PC-9 (cell line): ENCODE measurements at regions of chr1 and their contacts with region 1.

Region 1: DNA sequence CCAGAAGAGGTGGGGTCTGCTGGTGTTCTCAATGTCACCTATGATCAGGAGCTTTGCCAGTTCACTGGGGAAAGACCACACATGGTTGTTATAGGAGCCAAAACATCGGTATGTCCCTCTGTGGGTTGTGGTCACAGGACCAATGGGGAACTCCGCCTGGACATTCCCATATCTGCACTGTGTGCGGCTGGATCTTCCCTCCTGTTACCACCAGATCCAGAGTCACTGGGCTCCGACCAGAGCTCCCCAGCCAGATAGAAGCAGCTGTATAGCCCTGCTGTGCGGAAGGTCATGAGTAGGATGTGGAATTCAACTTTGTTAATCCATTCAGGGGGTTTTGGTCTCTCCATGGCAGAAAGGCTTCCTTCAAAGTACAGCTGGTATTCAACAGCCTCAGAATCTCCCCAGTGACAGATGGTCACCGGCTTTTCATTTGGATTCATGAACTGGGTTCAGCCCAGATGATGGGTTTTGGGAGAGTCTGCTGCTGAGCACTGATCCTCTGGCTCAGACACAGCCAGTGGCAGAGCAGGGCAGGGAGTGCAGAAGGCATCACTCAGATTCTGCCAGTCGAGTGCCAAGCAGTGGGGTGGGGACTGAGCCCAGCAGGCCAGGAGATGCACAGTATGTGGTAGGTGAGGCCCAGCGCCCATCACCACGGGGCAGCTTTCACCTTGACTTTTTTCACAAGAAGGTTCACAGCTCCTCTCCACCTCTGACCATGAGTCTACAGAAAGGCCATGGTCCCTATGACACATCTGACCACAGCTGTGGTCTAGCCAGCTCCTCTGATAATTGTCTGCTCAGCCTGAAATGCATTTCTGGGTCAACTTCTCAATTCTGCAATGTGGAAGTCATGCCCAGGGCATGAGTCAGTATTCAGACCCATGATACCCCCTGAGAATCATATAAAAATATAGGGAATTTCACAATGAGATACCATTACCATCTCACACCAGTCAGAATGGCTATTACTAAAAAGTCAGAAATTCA is 2.9 kb upstream of the SHCBP1L start:
- DNase-seq: peak; percentile 68 to 96
- H3K4me3 ChIP-seq: no peak overlapping the region
- H3K27ac ChIP-seq: peak overlapping the region; percentile 78
- H3K4me1 ChIP-seq: peaks cover 20% of the 10 kb centered on the region
- H3K27me3 ChIP-seq: no peaks in the 10 kb centered on the region
- CTCF ChIP-seq: no peak

Region 2: GRCh38 chr1:182889997-182890396 is 65.9 kb before region 1 on chr1:
- CTCF ChIA-PET with region 1: no interaction called
- POLR2A ChIA-PET with region 1: no interaction called
- intact Hi-C with region 1: loop called (anchors 5 kb)
- DNase-seq: no peak
- H3K4me3 ChIP-seq: no peak overlapping the region
- H3K27ac ChIP-seq: no peak overlapping the region
- H3K4me1 ChIP-seq: peaks cover 13% of the 10 kb centered on the region
- H3K27me3 ChIP-seq: no peaks in the 10 kb centered on the region
- CTCF ChIP-seq: no peak

Region 3: DNA sequence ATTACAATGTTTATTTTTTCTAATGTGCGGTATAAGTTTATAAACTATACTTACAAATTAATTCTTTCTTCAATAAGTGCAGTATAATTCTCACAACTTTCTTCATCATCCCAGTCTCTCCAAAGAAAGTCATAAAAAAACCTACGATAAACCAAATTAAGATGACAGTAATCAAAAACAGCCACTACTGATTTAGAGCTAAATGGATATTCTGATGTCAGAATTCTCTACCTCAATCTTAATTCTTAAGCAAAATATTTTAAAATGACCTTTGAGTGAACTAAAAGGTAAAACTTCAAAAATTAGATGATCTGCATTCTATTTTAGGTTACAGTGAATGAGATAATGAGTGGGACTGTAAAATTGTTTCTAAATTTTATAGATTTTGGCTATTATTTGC is 16.5 kb before region 1 on chr1:
- CTCF ChIA-PET with region 1: no interaction called
- POLR2A ChIA-PET with region 1: interaction called, 28 read pairs
- intact Hi-C with region 1: no loop called
- DNase-seq: no peak
- H3K4me3 ChIP-seq: no peak overlapping the region
- H3K27ac ChIP-seq: no peak overlapping the region
- H3K4me1 ChIP-seq: no peaks in the 10 kb centered on the region
- H3K27me3 ChIP-seq: no peaks in the 10 kb centered on the region
- CTCF ChIP-seq: no peak

Region 4: GRCh38 chr1:183417772-183418491 is 462.0 kb after region 1 on chr1 and contains the start of gene NMNAT2:
- CTCF ChIA-PET with region 1: no interaction called
- POLR2A ChIA-PET with region 1: interaction called, 10 read pairs
- intact Hi-C with region 1: no loop called
- DNase-seq: peak; percentile 35 to 44
- H3K4me3 ChIP-seq: peak within 1 kb of the TSS; percentile 83
- H3K27ac ChIP-seq: peak within 1 kb of the TSS; percentile 43
- H3K4me1 ChIP-seq: peaks cover 28% of the 10 kb centered on the region
- H3K27me3 ChIP-seq: no peaks in the 10 kb centered on the region
- CTCF ChIP-seq: no peak
- total RNA-seq, gene NMNAT2: 22.5 and 29.2 TPM in 2 replicates